Right cardiac atrium (tissue), 5 donors: ENCODE measurements at regions of chr4 and their contacts with region 1.

Region 1: GRCh38 chr4:37686373-37687193 is at the start of gene RELL1:
- DNase-seq: peak; percentile 99 to 100 (median 100)
- ATAC-seq: peak; percentile 98
- H3K4me3 ChIP-seq: peak within 1 kb of the TSS; percentile 85
- H3K27ac ChIP-seq: peak within 1 kb of the TSS; percentile 95
- H3K4me1 ChIP-seq: peaks cover 2% of the 10 kb centered on the region
- H3K27me3 ChIP-seq: no peaks in the 10 kb centered on the region
- total RNA-seq, gene RELL1: 14.4 to 31.1 (median 21.9) TPM

Region 2: GRCh38 chr4:37528166-37528885 is 158.3 kb before region 1 on chr4:
- intact Hi-C with region 1: no loop called
- DNase-seq: no peak
- ATAC-seq: no peak
- H3K4me3 ChIP-seq: no peak overlapping the region
- H3K27ac ChIP-seq: no peak overlapping the region
- H3K4me1 ChIP-seq: no peaks in the 10 kb centered on the region
- H3K27me3 ChIP-seq: no peaks in the 10 kb centered on the region

Region 3: DNA sequence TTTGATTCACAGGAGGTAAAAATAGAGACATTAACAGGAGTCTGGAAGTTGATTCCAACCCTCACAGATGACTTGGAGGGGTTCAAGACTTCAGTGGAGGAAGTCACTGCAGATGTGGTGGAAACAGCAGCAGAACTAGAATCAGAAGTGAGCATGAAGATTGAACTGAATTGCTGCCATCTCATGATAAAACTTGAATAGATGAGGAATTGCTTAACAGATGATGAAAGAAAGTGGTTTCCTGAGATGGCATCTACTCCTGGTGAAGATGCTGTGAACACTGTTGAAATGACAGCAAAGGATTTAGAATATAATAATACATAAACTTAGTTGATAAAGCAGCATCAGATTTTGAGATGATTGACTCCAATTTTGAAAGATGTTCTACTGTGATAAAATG is 77.0 kb before region 1 on chr4:
- intact Hi-C with region 1: loop called in 1 of 4 experiments (anchors 5 kb)
- DNase-seq: no peak
- ATAC-seq: no peak
- H3K4me3 ChIP-seq: no peak overlapping the region
- H3K27ac ChIP-seq: no peak overlapping the region
- H3K4me1 ChIP-seq: no peaks in the 10 kb centered on the region
- H3K27me3 ChIP-seq: no peaks in the 10 kb centered on the region

Region 4: DNA sequence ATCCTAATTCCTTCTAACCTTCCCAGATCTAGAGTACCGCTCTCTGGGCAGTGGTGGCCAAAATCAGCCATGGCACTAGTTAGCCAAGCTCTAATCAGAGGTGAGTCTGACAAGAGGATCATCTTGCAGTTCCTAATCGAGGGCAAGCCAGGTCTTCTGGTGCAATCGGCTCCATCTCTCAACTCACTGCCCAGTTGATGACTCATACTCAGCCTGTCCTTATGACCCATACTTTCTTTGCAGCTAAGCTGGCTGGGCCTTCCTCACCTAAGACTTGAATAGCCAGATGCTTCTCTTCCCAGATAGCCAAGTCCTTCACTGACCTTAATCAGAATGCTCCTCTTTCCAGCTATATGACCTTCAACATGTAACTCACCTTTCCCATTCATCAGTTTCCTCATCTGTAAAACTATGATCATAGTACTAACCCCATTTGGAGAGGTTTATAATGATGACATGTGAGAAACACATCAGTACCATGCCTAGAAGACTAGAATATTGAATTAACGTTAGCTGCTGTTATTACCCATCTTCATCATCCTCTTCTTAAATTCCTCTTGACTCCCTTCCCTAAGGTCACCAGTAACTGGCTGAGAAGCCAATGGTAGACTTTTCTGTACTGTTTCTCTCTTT is 57.5 kb before region 1 on chr4:
- intact Hi-C with region 1: loop called in 1 of 4 experiments (anchors 10 kb)
- DNase-seq: no peak
- ATAC-seq: peak in 1 of 2 donors; percentile 69
- H3K4me3 ChIP-seq: no peak overlapping the region
- H3K27ac ChIP-seq: no peak overlapping the region
- H3K4me1 ChIP-seq: peaks cover 2% of the 10 kb centered on the region
- H3K27me3 ChIP-seq: no peaks in the 10 kb centered on the region

Region 5: DNA sequence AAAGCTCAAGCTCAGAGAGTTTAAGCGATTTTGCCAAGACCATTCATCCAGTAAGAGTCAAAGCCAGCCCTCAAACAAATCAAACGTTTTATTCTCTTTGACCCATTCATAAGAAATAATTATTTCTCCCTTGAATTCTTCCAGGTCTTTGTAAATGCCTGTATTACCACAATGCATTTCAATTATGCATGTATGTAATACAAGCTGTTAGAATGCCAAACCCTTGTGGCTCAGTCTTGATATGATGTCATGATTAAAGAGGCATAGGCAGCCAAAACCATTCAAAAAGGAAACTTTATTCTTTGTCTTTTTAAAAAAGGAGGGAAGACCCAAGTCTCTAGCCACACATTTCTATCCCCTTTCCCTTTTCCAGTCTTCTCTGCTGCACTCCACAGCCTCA is 83.4 kb after region 1 on chr4:
- intact Hi-C with region 1: no loop called
- DNase-seq: no peak
- ATAC-seq: no peak
- H3K4me3 ChIP-seq: no peak overlapping the region
- H3K27ac ChIP-seq: no peak overlapping the region
- H3K4me1 ChIP-seq: no peaks in the 10 kb centered on the region
- H3K27me3 ChIP-seq: peaks cover 3% of the 10 kb centered on the region

Region 6: DNA sequence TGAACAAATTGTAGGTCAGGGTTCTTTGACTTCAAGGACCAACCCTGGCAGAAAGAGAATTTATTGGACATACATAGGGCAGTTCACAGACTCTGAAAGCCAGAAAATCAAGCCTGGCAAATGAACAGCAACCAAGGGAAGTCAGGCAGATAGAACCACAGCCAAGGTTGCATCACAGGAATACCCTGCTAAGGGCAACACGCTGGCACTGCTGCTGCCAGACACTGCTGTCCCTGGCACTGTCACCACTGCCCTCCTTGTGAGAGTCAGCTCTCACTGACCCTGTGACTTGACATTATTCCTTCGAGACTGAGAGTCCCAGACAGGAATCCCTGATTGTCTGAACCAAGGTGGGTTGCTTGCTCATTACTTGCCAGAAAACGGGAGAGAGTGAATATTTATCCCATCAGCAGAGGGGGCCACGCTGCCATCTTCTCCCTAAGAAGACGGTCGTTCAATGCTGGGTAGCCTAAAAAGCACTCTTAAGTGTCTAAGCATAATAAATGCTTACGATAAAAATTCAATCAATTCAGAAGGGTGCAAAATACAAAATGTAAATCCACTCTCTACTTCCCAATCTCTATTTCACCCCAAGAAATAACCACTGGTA is 250.4 kb after region 1 on chr4:
- intact Hi-C with region 1: no loop called
- DNase-seq: peak; percentile 52 to 73 (median 66)
- ATAC-seq: peak; percentile 95 to 96
- H3K4me3 ChIP-seq: no peak overlapping the region
- H3K27ac ChIP-seq: peak overlapping the region; percentile 67
- H3K4me1 ChIP-seq: peaks cover 9% of the 10 kb centered on the region
- H3K27me3 ChIP-seq: no peaks in the 10 kb centered on the region